GM13976 (cell line): ENCODE measurements at regions of chr12 and their contacts with region 1.

Region 1: GRCh38 chr12:27652174-27652763 is 44.0 kb upstream of the REP15 start:
- DNase-seq: peak; percentile 44
- CTCF ChIP-seq: peak; percentile 72

Region 2: GRCh38 chr12:27434673-27435565 is 217.3 kb before region 1 on chr12:
- in situ Hi-C with region 1: loop called (anchors 10 kb)
- DNase-seq: peak; percentile 36
- CTCF ChIP-seq: no peak